Transverse colon (tissue), 4 donors: ENCODE measurements at regions of chrX and their contacts with region 1.

Region 1: DNA sequence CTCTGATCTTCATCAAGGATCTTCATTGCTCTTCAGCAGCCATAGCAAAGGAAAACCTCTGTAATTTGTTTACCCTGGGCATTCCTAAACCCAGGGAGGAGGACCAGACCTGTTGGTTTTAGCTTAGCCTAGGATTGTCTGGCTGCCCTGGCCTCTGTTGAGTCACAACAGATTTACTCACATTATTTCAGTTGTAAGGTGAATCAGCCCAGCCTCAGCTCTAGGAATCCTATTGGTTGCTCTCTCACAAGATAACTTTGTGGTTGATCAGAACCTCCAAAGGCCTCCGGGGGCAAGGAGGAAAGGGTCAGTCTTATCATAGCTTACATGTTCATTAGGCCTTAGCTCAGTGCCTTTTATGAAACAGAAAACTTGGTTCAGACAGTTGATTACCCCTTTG is 41.0 kb downstream of the PDK3 start:
- DNase-seq: no peak
- H3K4me3 ChIP-seq: no peak overlapping the region
- H3K27ac ChIP-seq: no peak overlapping the region
- H3K4me1 ChIP-seq: no peaks in the 10 kb centered on the region
- H3K27me3 ChIP-seq: no peaks in the 10 kb centered on the region
- CTCF ChIP-seq: no peak
- EP300 ChIP-seq: no peak
- POLR2A ChIP-seq: no peak

Region 2: DNA sequence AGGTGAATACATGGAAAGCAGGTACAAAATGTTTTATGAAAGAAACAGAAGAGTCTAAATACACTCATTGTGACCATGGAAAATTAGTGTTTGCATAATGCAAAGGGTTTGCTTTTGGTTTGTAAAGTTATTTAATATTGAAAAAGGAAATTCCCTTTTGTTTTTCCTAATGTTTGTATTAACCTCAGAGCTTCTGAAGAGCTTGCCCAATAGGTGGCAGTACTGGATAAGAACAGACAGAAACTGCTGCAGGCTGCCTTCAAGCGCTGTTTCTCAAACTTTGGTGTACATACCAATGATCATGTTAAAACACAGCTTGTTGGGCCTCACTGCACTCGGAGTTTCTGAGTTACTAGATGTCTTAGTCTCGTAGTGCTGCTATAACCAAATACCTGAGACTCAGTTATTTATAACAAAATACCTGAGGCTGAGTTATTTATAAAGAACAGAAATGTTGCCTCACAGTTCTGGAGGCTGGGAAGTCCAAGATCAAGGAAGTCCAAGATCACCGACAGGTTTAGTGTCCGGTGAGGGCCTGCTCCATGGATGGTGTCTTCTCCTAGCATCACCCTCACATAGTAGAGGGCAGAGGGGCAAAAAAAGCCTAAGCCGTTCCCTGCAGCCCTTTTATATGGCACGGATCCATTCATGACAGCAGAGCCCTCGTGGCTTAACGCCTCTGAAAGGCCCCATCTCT is 246.4 kb before region 1 on chrX:
- in situ Hi-C with region 1: no loop called
- intact Hi-C with region 1: loop called (anchors 10 kb)
- DNase-seq: peak; percentile 26
- H3K4me3 ChIP-seq: no peak overlapping the region
- H3K27ac ChIP-seq: peak overlapping the region in 2 of 4 donors; percentile 28 to 55
- H3K4me1 ChIP-seq: peaks cover 0 to 12% (median 3%) of the 10 kb centered on the region in 4 donors
- H3K27me3 ChIP-seq: no peaks in the 10 kb centered on the region
- CTCF ChIP-seq: peak; percentile 24 to 45 (median 38)
- EP300 ChIP-seq: no peak
- POLR2A ChIP-seq: no peak

Region 3: DNA sequence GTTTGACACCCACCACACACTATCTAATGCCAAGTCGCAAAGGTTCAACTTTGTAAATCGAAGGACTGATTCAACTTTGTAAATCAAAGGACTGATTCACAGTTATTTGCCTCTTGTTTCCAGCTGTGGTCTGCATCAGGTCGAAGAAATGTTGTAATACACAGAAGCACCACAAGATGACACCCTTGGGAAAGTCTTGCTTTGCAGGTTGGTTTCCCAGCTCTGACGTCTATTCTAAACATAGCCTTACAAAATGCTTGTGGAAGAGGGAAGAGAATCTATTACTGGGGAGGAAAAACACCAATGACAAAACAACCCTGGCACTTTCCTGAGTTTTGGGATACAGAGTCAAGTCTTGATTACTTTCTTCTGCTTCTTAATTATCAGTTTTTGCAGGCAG is 110.3 kb before region 1 on chrX:
- in situ Hi-C with region 1: loop called in 3 of 4 experiments (anchors 5 to 10 kb)
- intact Hi-C with region 1: no loop called
- DNase-seq: peak; percentile 29
- H3K4me3 ChIP-seq: no peak overlapping the region
- H3K27ac ChIP-seq: peak overlapping the region; percentile 38 to 64 (median 49)
- H3K4me1 ChIP-seq: no peaks in the 10 kb centered on the region
- H3K27me3 ChIP-seq: no peaks in the 10 kb centered on the region
- CTCF ChIP-seq: peak; percentile 59 to 86 (median 75)
- EP300 ChIP-seq: no peak
- POLR2A ChIP-seq: no peak